Activated T-helper 1 cell treated with anti-CD3 and anti-CD28 coated beads, Interleukin-12 subunit alpha, Interleukin-12 subunit beta, Interleukin-2, Interleukin-4 antibody, amounts not matched to agents 30 ng/mL and 10 ng/mL and 1 ng/mL, durations not matched to agents 14 hours and 24 hours and 36 hours (primary cell): ENCODE measurements at regions of chr3 and their contacts with region 1.

Region 1: DNA sequence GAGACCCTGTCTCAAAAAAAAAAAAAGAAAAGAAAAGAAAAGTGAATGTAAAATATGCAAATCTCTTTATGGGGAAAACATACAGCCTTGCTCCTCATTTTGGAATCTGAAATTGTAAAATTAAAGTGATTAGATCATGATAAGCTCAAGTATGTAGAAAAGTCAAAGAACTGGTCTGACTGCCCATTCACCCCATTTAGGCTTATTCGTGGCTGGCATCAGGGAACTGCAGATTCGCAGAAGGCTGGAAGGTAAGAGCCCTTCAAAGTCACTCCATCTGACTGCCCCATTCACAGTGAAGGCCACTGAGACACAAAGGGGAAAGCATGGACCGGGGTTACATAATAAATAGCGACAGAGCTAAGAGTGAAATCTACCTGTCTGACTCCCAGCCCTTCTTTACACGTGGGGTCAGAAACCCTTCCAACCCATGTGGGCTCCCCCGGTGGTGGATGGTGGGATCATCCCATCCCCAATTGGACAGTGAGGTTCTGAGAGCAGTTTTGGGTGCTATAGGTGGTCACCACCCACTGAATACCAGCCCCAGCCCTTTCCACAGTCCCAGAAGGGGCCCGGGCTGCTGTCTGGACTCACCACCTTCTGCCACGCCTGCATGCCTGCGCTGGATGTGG is 18.1 kb downstream of the DZIP1L start:
- DNase-seq: no peak
- H3K4me3 Mint-ChIP-seq: no peak overlapping the region
- H3K27ac Mint-ChIP-seq: no peak overlapping the region
- H3K4me1 Mint-ChIP-seq: no peaks in the 10 kb centered on the region
- H3K27me3 Mint-ChIP-seq: peaks cover 16% of the 10 kb centered on the region

Region 2: GRCh38 chr3:138113326-138113725 is 16.0 kb after region 1 on chr3:
- intact Hi-C with region 1: loop called (anchors 1 kb)
- DNase-seq: no peak
- H3K4me3 Mint-ChIP-seq: no peak overlapping the region
- H3K27ac Mint-ChIP-seq: no peak overlapping the region
- H3K4me1 Mint-ChIP-seq: peaks cover 14% of the 10 kb centered on the region
- H3K27me3 Mint-ChIP-seq: peaks cover 20% of the 10 kb centered on the region

Region 3: GRCh38 chr3:138349926-138350665 is 252.8 kb after region 1 on chr3:
- intact Hi-C with region 1: no loop called
- DNase-seq: no peak
- H3K4me3 Mint-ChIP-seq: peak overlapping the region; percentile 33
- H3K27ac Mint-ChIP-seq: no peak overlapping the region
- H3K4me1 Mint-ChIP-seq: peaks cover 12% of the 10 kb centered on the region
- H3K27me3 Mint-ChIP-seq: peaks cover 31% of the 10 kb centered on the region

Region 4: DNA sequence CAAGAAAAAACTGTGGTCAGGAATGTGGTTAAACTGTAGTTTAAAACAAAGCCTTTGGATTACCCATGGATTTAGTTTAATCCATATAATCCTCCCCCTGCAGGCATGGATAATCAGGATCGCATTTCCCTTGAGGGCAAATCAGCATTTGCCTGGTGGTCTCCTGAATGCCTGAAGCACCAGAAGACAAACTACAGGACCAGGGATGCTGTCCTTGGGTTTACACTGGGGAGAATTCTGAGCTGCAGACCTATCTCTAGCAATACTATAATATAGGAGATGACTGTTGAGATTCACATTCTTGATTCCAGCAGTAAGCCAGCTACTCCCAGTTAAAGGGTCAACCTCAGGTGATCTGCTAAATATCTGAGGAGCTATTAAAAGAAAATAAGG is 726.8 kb after region 1 on chr3:
- intact Hi-C with region 1: no loop called
- DNase-seq: no peak
- H3K4me3 Mint-ChIP-seq: no peak overlapping the region
- H3K27ac Mint-ChIP-seq: no peak overlapping the region
- H3K4me1 Mint-ChIP-seq: peaks cover 6% of the 10 kb centered on the region
- H3K27me3 Mint-ChIP-seq: no peaks in the 10 kb centered on the region